PC-9 (cell line): ENCODE measurements at regions of chrX and their contacts with region 1.

Region 1: DNA sequence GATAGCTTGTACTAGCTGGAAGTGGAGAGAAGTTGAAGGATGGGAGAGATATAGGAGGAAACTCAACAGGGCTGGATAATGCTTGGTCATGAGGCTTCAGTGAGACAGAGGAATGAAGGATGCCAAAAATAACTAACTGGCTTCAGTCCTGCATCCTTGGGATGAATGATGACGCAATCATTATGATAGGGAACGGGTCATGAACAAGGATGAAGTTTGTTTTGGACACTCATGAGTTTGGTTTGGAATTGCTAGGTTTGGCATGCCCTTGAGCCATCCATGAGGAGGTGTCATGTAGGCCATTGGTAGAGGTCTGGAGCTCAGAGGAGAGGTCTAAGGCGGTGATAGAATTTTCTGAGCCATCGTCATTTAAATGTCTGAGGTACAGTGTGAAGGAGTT is 160.0 kb upstream of the NHS start:
- DNase-seq: no peak
- H3K4me3 ChIP-seq: no peak overlapping the region
- H3K27ac ChIP-seq: no peak overlapping the region
- H3K4me1 ChIP-seq: no peaks in the 10 kb centered on the region
- H3K27me3 ChIP-seq: no peaks in the 10 kb centered on the region
- CTCF ChIP-seq: no peak

Region 2: DNA sequence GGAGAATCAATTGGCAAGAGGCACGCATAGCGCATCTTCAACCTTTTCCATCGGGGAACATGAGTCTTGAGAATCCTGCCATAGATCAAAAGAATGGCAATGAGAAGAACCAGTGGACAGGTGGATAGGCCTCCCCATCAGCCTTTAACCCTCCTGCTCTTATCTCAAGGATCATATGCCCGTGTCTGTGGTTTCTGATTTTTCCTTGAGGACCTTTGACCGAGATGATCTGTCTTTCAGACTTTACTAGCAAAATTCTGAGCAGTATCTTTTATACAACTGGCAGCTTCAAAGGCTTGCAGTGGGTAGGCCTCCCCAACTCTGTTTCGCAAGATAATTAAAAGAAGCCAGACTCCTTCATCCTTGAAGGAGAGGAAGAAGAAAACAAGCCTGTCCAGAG is 94.1 kb before region 1 on chrX:
- CTCF ChIA-PET with region 1: no interaction called
- POLR2A ChIA-PET with region 1: no interaction called
- intact Hi-C with region 1: loop called (anchors 10 kb)
- DNase-seq: no peak
- H3K4me3 ChIP-seq: no peak overlapping the region
- H3K27ac ChIP-seq: no peak overlapping the region
- H3K4me1 ChIP-seq: no peaks in the 10 kb centered on the region
- H3K27me3 ChIP-seq: no peaks in the 10 kb centered on the region
- CTCF ChIP-seq: no peak